H1 (cell line): ENCODE measurements at regions of chr12 and their contacts with region 1.

Region 1: GRCh38 chr12:121334513-121335343 is 17.5 kb downstream of the ANAPC5 start:
- DNase-seq: no peak
- H3K4me3 ChIP-seq: no peak overlapping the region
- H3K27ac ChIP-seq: no peak overlapping the region
- H3K4me1 ChIP-seq: 0 out of 7 replicates have a peak, but pooled peaks cover 0 to 3% (median 0%) of the 10 kb centered on the region in 4 experiments
- H3K27me3 ChIP-seq: no peaks in the 10 kb centered on the region
- CTCF ChIP-seq: peak in 2 of 3 experiments; percentile 57 to 87; a peak in 3 of 4 replicates
- EP300 ChIP-seq: no peak
- POLR2A ChIP-seq: no peak
- RAD21 ChIP-seq: peak; percentile 50 to 63

Region 2: GRCh38 chr12:121279081-121279394 is 55.7 kb before region 1 on chr12:
- CTCF ChIA-PET with region 1: no interaction called
- POLR2A ChIA-PET with region 1: no interaction called
- DNase-seq: no peak
- H3K4me3 ChIP-seq: no peak overlapping the region
- H3K27ac ChIP-seq: no peak overlapping the region
- H3K4me1 ChIP-seq: peaks cover 0 to 8% (median 2%) of the 10 kb centered on the region in 4 experiments; a peak in 4 of 7 replicates
- H3K27me3 ChIP-seq: no peaks in the 10 kb centered on the region
- CTCF ChIP-seq: no peak
- EP300 ChIP-seq: no peak
- POLR2A ChIP-seq: no peak
- RAD21 ChIP-seq: no peak

Region 3: DNA sequence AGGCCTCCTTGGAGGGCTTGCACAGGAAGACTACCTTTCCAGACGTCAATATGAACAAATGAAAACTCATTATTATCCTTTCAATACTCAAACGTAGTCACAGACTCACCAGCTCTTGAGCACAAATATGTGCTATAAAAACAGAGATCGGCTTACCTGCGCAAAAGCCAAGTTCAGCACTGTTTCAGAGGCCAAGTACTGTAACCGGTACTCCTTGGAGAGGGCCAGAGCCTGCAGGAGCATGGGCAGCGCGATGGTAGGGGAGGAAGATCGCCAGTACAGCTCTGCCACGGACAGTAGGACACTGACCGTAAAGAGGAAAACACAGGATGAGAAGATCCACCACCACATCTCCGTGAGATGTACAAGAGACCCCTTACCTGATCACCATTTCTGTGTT is 16.6 kb before region 1 on chr12:
- CTCF ChIA-PET with region 1: interaction called, 10 read pairs
- POLR2A ChIA-PET with region 1: interaction called, 4 read pairs
- DNase-seq: no peak
- H3K4me3 ChIP-seq: no peak overlapping the region
- H3K27ac ChIP-seq: no peak overlapping the region
- H3K4me1 ChIP-seq: no peaks in the 10 kb centered on the region
- H3K27me3 ChIP-seq: no peaks in the 10 kb centered on the region
- CTCF ChIP-seq: no peak
- EP300 ChIP-seq: no peak
- POLR2A ChIP-seq: no peak
- RAD21 ChIP-seq: no peak

Region 4: DNA sequence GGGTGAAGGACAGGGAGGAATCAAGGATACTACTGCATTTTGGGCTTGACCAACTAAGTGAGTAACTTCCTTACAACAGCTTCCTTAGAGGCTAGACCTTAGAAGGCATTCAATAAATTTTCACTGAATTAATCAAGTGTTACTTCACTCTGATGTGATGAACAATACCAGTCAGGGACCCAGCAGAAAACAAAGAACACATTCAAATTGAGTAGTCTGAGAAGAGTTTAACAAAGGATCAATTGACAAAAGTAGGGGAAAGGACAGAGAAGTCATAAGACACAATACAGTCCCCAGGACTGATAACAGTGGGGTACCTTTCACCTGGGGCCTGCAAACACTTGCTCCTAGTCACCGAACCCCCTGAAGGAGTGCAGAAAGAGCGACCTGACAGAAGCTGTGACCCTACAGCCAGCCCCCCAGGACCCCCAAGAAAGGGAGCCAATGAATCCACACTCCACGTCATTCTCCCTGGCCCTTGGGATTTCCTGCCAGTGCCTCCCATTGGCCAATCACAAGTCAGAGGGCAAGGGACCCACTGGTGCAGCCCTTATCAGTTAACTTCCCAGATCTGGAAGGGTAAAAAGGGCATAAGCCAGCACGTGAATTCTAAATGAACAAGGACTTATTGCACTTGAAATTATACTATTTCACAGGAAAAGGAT is 10.6 kb after region 1 on chr12:
- CTCF ChIA-PET with region 1: interaction called, 24 read pairs
- POLR2A ChIA-PET with region 1: interaction called, 9 read pairs
- DNase-seq: no peak
- H3K4me3 ChIP-seq: no peak overlapping the region
- H3K27ac ChIP-seq: no peak overlapping the region
- H3K4me1 ChIP-seq: no peaks in the 10 kb centered on the region
- H3K27me3 ChIP-seq: no peaks in the 10 kb centered on the region
- CTCF ChIP-seq: no peak
- EP300 ChIP-seq: no peak
- POLR2A ChIP-seq: no peak
- RAD21 ChIP-seq: no peak

Region 5: GRCh38 chr12:121568971-121569751 is 234.4 kb after region 1 on chr12:
- CTCF ChIA-PET with region 1: no interaction called
- POLR2A ChIA-PET with region 1: no interaction called
- DNase-seq: no peak
- H3K4me3 ChIP-seq: no peak overlapping the region
- H3K27ac ChIP-seq: no peak overlapping the region
- H3K4me1 ChIP-seq: no peaks in the 10 kb centered on the region
- H3K27me3 ChIP-seq: no peaks in the 10 kb centered on the region
- CTCF ChIP-seq: no peak
- EP300 ChIP-seq: no peak
- POLR2A ChIP-seq: no peak; a peak in 1 of 3 replicates
- RAD21 ChIP-seq: no peak